Sigmoid colon (tissue), 7 donors: ENCODE measurements at regions of chr13 and their contacts with region 1.

Region 1: DNA sequence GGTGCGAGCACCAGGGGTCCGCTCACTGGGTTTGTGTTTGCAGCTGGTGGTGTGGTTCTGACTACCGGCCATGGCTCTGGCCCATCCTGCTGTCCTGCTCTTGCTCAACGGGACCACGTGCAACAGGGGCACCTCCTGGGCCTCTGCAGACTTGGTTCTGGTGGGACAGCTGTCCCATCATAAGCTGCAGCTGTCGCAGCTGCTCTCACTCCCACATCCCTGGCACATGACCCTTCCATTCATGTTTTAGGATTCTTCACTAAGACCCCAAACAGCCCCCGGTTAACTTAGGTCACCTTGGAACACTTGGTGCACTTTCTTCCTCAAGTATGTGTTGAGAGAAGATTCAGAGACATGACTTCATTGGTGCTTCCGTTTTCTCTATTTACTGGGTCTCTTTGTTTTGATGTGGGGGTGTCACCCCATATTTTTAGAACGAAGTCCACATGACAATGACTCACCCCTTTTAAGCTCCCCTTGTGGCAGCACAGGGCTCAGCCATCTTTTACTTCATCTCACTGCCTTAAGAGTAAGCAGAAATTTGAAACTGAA is 68.4 kb upstream of the ARHGEF7 start:
- DNase-seq: no peak
- H3K4me3 ChIP-seq: no peak overlapping the region
- H3K27ac ChIP-seq: peak overlapping the region in 1 of 4 donors; percentile 0
- H3K4me1 ChIP-seq: peaks cover 0 to 6% (median 0%) of the 10 kb centered on the region in 4 donors
- H3K27me3 ChIP-seq: no peaks in the 10 kb centered on the region
- CTCF ChIP-seq: no peak
- EP300 ChIP-seq: no peak
- POLR2A ChIP-seq: no peak

Region 2: GRCh38 chr13:110944121-110944967 is 102.3 kb before region 1 on chr13:
- intact Hi-C with region 1: loop called (anchors 2 kb)
- DNase-seq: no peak
- H3K4me3 ChIP-seq: no peak overlapping the region
- H3K27ac ChIP-seq: no peak overlapping the region
- H3K4me1 ChIP-seq: no peaks in the 10 kb centered on the region
- H3K27me3 ChIP-seq: no peaks in the 10 kb centered on the region
- CTCF ChIP-seq: peak in 3 of 4 experiments; percentile 33 to 47 (median 43)
- EP300 ChIP-seq: no peak
- POLR2A ChIP-seq: no peak

Region 3: GRCh38 chr13:110965038-110965754 is 81.5 kb before region 1 on chr13:
- intact Hi-C with region 1: no loop called
- DNase-seq: no peak
- H3K4me3 ChIP-seq: no peak overlapping the region
- H3K27ac ChIP-seq: no peak overlapping the region
- H3K4me1 ChIP-seq: no peaks in the 10 kb centered on the region
- H3K27me3 ChIP-seq: no peaks in the 10 kb centered on the region
- CTCF ChIP-seq: no peak
- EP300 ChIP-seq: no peak
- POLR2A ChIP-seq: no peak